ENCODE measurements at regions of chr15 and their contacts with region 1.

Region 1: GRCh38 chr15:34942363-34942762 is 27.2 kb downstream of the AQR start:
- DNase-seq: no peak
- H3K4me3 ChIP-seq: no peak overlapping the region
- H3K27ac ChIP-seq: no peak overlapping the region
- H3K4me1 ChIP-seq: no peaks in the 10 kb centered on the region
- H3K27me3 ChIP-seq: no peaks in the 10 kb centered on the region
- CTCF ChIP-seq: no peak
- EP300 ChIP-seq: no peak
- POLR2A ChIP-seq: no peak

Region 2: DNA sequence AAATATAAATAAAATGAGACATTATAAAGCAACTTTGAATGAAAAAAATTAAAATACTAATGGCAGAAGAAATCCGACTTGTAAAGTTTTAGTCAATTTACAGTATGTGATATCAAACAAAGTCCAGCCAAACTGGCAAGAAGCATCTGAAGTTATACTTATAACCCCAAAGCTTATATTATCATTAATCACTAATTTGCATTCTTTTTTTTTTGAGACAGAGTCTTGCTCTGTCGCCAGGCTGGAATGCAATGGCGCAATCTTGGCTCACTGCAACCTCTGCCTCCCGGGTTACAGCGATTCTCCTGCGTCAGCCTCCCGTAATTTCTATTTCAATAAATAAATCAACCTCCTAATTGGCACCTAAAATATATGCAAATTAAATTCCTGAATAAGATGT is 52.9 kb before region 1 on chr15:
- in situ Hi-C with region 1: loop called in 1 of 4 experiments (anchors 10 kb)
- intact Hi-C with region 1: no loop called
- DNase-seq: no peak
- H3K4me3 ChIP-seq: no peak overlapping the region
- H3K27ac ChIP-seq: no peak overlapping the region
- H3K4me1 ChIP-seq: no peaks in the 10 kb centered on the region
- H3K27me3 ChIP-seq: no peaks in the 10 kb centered on the region
- CTCF ChIP-seq: no peak
- EP300 ChIP-seq: no peak
- POLR2A ChIP-seq: no peak